ENCODE measurements at regions of chr11 and their contacts with region 1.

Region 1: GRCh38 chr11:121648306-121648705 is 195.5 kb upstream of the SORL1-AS1 start:
- DNase-seq: no peak
- H3K4me3 ChIP-seq: no peak overlapping the region
- CTCF ChIP-seq: peak; percentile 5

Region 2: GRCh38 chr11:122101625-122102291 is 453.5 kb after region 1 on chr11:
- in situ Hi-C with region 1: loop called (anchors 5 kb)
- DNase-seq: peak; percentile 87
- H3K4me3 ChIP-seq: peak overlapping the region; percentile 79
- CTCF ChIP-seq: peak; percentile 71

Measured in astrocyte of the cerebellum (primary cell).